Heart left ventricle (tissue), 16 donors: ENCODE measurements at regions of chr11 and their contacts with region 1.

Region 1: GRCh38 chr11:85941380-85941973 is 86.3 kb downstream of the CCDC83 start:
- DNase-seq: peak in 2 of 5 donors; percentile 51 to 63
- ATAC-seq: peak in 3 of 4 donors; percentile 79 to 85 (median 83)
- H3K4me3 ChIP-seq: no peak overlapping the region
- H3K27ac ChIP-seq: no peak overlapping the region
- H3K4me1 ChIP-seq: peaks cover 0 to 19% (median 7%) of the 10 kb centered on the region in 12 donors
- H3K27me3 ChIP-seq: no peaks in the 10 kb centered on the region
- CTCF ChIP-seq: peak; percentile 63 to 85 (median 78)
- POLR2A ChIP-seq: no peak

Region 2: DNA sequence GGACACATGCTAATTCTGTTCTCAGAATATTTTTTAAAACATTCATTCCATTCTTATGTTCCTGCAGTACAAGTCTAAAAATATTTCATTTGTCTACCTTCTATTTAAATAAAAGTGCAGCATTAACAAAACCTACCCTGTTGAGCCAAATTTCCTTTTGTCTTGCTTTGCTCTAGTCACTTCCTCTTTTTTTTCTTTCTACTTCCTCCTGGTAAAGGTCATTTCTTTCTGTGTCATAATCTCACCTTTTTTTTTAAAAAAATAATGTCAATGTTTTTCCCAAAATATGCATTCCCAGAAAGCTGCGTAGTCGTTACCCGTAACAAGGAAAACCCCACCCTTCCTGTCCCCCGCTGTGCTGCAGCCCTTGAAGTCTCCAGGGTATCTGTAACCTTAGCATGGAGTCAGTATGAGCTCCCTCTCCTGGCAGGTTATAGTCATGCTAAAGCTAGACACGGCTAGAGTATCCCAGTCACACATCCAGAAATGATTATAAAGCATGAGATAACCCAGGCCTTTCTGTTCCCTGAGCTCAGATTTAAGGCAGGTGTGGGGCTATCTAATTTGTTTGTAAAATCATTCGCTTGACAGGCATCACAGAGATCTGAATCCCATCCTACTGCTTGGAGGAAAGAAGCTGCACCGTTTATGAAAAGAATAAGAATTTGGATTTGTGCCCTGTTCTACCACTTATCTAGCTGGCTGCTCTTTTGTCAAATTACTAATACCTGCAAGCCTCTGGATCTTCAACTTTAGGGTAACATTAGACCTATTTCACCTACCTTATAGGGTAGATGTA is 252.0 kb after region 1 on chr11:
- intact Hi-C with region 1: loop called in 1 of 10 experiments (anchors 2 kb)
- DNase-seq: peak; percentile 72 to 88 (median 84)
- ATAC-seq: peak; percentile 97 to 99 (median 99)
- H3K4me3 ChIP-seq: peak overlapping the region in 9 of 12 donors; percentile 24 to 45 (median 38)
- H3K27ac ChIP-seq: peak overlapping the region; percentile 11 to 88 (median 68)
- H3K4me1 ChIP-seq: peaks cover 0 to 65% (median 14%) of the 10 kb centered on the region in 12 donors
- H3K27me3 ChIP-seq: no peaks in the 10 kb centered on the region
- CTCF ChIP-seq: peak; percentile 60 to 89 (median 79)
- POLR2A ChIP-seq: no peak

Region 3: GRCh38 chr11:86202013-86202336 is 260.5 kb after region 1 on chr11:
- intact Hi-C with region 1: loop called in 3 of 10 experiments (anchors 5 kb)
- DNase-seq: no peak
- ATAC-seq: peak in 2 of 4 donors; percentile 21 to 31
- H3K4me3 ChIP-seq: peak overlapping the region in 9 of 12 donors; percentile 33 to 56 (median 41)
- H3K27ac ChIP-seq: peak overlapping the region in 8 of 12 donors; percentile 12 to 87 (median 38)
- H3K4me1 ChIP-seq: peaks cover 0 to 58% (median 4%) of the 10 kb centered on the region in 12 donors
- H3K27me3 ChIP-seq: no peaks in the 10 kb centered on the region
- CTCF ChIP-seq: no peak
- POLR2A ChIP-seq: no peak

Region 4: GRCh38 chr11:86218125-86219084 is 276.9 kb after region 1 on chr11:
- intact Hi-C with region 1: loop called (anchors 1 to 5 kb)
- DNase-seq: peak; percentile 55 to 68 (median 65)
- ATAC-seq: peak; percentile 74 to 95 (median 92)
- H3K4me3 ChIP-seq: peak overlapping the region in 10 of 12 donors; percentile 22 to 53 (median 38)
- H3K27ac ChIP-seq: peak overlapping the region in 1 of 12 donors; percentile 15
- H3K4me1 ChIP-seq: peaks cover 0 to 19% (median 4%) of the 10 kb centered on the region in 12 donors
- H3K27me3 ChIP-seq: no peaks in the 10 kb centered on the region
- CTCF ChIP-seq: peak; percentile 85 to 95 (median 93)
- POLR2A ChIP-seq: no peak

Region 5: GRCh38 chr11:86291466-86292262 is 350.2 kb after region 1 on chr11:
- intact Hi-C with region 1: loop called (anchors 5 to 10 kb)
- DNase-seq: peak in 2 of 5 donors; percentile 12 to 33
- ATAC-seq: peak in 1 of 4 donors; percentile 34
- H3K4me3 ChIP-seq: no peak overlapping the region
- H3K27ac ChIP-seq: no peak overlapping the region
- H3K4me1 ChIP-seq: peaks cover 0 to 9% (median 0%) of the 10 kb centered on the region in 12 donors
- H3K27me3 ChIP-seq: no peaks in the 10 kb centered on the region
- CTCF ChIP-seq: peak; percentile 36 to 68 (median 54)
- POLR2A ChIP-seq: no peak